Ascending aorta (tissue), 2 donors: ENCODE measurements at regions of chr11 and their contacts with region 1.

Region 1: GRCh38 chr11:131999955-132000354 is 629.5 kb downstream of the NTM start:
- DNase-seq: no peak
- H3K4me3 ChIP-seq: no peak overlapping the region
- H3K27ac ChIP-seq: no peak overlapping the region
- H3K4me1 ChIP-seq: no peaks in the 10 kb centered on the region
- H3K27me3 ChIP-seq: no peaks in the 10 kb centered on the region
- CTCF ChIP-seq: no peak

Region 2: GRCh38 chr11:131824771-131825170 is 175.2 kb before region 1 on chr11:
- intact Hi-C with region 1: no loop called
- DNase-seq: no peak
- H3K4me3 ChIP-seq: no peak overlapping the region
- H3K27ac ChIP-seq: no peak overlapping the region
- H3K4me1 ChIP-seq: no peaks in the 10 kb centered on the region
- H3K27me3 ChIP-seq: no peaks in the 10 kb centered on the region
- CTCF ChIP-seq: no peak

Region 3: DNA sequence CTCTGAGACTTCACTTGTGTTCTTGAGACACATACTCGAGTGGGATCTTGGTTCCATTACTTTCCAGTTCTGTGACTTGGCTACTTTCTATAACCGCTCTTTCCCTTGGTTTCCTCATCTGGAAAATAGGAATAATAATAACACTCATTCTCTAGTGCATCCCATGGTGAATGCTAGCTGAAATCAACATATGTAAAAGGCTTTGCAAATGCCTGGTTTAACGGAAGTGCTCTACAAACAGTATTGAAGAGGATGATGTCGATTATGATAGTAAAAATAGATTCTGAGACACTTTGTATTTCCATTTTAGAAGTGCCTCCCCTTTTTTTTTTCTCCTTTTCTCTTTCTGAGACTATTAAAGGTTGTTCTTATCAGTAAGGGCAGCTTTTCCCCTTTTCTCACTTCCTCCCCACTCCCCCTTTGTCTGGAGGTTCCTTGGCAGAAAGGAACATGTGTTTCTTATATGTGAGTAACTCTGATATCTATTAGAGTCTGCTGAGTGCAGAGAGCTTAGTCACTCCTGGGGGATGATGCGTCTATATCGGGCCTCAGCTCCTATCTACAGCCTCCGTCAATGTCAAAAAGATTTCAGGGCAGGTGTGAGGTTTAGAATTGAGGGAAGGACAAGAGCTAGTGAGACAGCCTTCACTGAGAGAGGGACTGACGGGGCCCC is 140.3 kb before region 1 on chr11:
- intact Hi-C with region 1: no loop called
- DNase-seq: no peak
- H3K4me3 ChIP-seq: no peak overlapping the region
- H3K27ac ChIP-seq: no peak overlapping the region
- H3K4me1 ChIP-seq: no peaks in the 10 kb centered on the region
- H3K27me3 ChIP-seq: no peaks in the 10 kb centered on the region
- CTCF ChIP-seq: no peak

Region 4: GRCh38 chr11:131951121-131951520 is 48.8 kb before region 1 on chr11:
- intact Hi-C with region 1: loop called (anchors 5 kb)
- DNase-seq: no peak
- H3K4me3 ChIP-seq: no peak overlapping the region
- H3K27ac ChIP-seq: no peak overlapping the region
- H3K4me1 ChIP-seq: no peaks in the 10 kb centered on the region
- H3K27me3 ChIP-seq: no peaks in the 10 kb centered on the region
- CTCF ChIP-seq: no peak

Region 5: GRCh38 chr11:132177106-132177505 is 177.2 kb after region 1 on chr11:
- intact Hi-C with region 1: no loop called
- DNase-seq: no peak
- H3K4me3 ChIP-seq: no peak overlapping the region
- H3K27ac ChIP-seq: no peak overlapping the region
- H3K4me1 ChIP-seq: no peaks in the 10 kb centered on the region
- H3K27me3 ChIP-seq: no peaks in the 10 kb centered on the region
- CTCF ChIP-seq: no peak